GM13977 (cell line): ENCODE measurements at regions of chr6 and their contacts with region 1.

Region 1: GRCh38 chr6:7282097-7282906 is 30.7 kb downstream of the SSR1 start:
- DNase-seq: no peak
- CTCF ChIP-seq: no peak

Region 2: GRCh38 chr6:7324520-7324919 is 42.2 kb after region 1 on chr6:
- in situ Hi-C with region 1: no loop called
- DNase-seq: no peak
- CTCF ChIP-seq: no peak

Region 3: DNA sequence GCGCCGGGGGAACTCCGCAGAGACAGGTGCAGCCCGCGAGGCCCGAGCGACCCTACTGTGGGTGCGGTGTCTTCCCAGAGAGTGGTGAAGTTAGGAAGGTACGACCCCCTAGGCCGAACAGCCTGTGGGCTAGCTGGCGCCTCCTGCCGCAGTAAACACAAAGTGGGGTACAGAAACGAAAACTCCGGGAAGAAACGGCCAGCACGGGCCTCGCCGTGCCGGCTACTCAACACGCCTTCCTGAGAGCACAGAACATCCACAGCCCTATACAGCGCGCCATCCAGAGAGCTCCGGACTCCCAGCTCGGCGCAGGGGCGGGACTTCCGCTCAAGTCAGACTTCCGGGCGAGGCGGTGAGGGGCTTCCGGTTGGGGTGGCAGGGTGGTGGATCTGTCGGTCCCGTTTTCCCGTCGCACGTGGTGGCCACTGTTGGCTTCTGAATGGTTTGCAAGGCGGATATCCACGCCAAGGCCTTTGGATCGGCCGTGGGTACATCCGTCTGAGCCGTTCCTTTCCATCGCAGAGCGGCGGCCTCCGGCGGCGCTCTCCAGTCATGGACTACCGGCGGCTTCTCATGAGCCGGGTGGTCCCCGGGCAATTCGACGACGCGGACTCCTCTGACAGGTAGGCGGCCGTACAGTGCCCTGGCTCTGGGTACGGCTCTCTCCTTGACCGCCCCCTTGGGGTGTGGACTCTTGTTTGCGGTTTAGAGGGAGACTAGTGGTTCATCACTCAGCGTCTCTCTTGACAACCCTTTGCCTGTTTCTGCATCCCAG is 107.3 kb after region 1 on chr6 and contains the starts of genes CAGE1 and RIOK1:
- in situ Hi-C with region 1: loop called (anchors 25 kb)
- DNase-seq: peak; percentile 91
- CTCF ChIP-seq: no peak

Region 4: GRCh38 chr6:7413151-7413823 is 131.0 kb after region 1 on chr6:
- in situ Hi-C with region 1: no loop called
- DNase-seq: no peak
- CTCF ChIP-seq: no peak

Region 5: DNA sequence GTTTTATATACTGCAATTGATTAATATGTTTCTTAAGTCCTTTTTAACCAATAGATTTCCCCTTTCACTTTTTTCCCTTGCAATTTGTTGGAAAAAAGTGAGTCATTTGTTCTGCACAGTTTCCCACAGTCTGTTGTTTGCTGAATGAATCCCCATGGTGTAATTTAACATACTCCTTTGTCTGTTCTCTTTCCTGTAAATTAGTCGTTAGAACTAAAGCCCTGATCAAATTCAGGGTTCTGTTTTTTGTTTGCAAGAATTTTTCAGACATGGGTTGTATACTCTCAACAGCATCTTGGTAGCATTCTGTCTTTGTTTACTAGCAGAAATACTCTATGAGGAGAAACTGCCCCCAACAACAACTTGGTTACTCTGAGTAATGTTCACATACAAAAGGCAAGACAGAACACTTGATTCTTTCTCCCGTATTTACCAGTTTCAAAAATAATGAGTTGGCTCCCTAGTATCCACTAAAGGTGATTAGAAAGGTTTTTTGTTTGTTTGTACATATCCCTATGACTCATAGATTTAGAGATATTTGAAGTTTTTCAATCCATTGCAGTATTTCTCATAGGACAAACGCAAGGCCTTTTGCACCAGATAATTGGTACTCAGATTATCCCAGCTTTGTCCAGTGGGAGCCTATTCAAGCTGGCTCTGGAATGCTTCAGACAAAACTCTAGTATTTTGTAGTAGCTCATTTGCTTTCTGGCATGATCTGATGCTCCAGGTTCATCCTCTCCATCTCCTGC is 765.4 kb after region 1 on chr6:
- in situ Hi-C with region 1: loop called (anchors 25 kb)
- DNase-seq: no peak
- CTCF ChIP-seq: no peak